Ovary (tissue), 10 donors: ENCODE measurements at regions of chr7 and their contacts with region 1.

Region 1: DNA sequence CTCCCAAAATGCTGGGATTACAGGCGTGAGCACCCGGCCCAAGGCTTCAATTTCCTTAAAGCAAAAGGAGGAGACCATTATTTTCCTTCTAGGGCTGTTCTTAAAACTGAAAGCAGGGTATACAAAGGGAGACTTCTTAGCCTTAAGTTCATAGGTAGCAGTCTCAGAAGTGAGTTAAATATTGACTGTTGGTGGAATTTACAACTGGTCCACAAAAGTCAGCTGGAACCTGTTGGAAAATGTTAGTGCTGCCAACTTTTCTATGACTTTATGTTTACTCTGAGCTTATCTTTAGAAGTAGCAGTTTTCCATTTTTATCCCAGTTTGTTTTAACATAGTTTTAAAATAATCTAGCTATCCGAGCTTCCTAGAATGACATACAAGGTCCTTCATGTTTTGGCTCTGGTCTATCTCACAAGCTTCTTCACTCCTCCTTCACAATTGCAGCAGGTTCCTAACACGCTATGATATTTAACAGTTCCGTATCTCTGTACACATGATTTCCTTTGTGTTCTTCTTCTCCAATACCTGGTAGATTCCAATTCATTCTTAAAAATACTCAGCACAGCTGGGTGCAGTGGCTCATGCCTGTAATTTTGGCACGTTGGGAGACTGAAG is 3.3 kb downstream of the SLC26A3 start:
- DNase-seq: no peak
- H3K4me3 ChIP-seq: no peak overlapping the region
- H3K27ac ChIP-seq: peak overlapping the region in 1 of 2 donors; percentile 1
- H3K4me1 ChIP-seq: peaks cover 11% of the 10 kb centered on the region
- H3K27me3 ChIP-seq: no peaks in the 10 kb centered on the region
- CTCF ChIP-seq: no peak
- EP300 ChIP-seq: no peak
- POLR2A ChIP-seq: no peak

Region 2: DNA sequence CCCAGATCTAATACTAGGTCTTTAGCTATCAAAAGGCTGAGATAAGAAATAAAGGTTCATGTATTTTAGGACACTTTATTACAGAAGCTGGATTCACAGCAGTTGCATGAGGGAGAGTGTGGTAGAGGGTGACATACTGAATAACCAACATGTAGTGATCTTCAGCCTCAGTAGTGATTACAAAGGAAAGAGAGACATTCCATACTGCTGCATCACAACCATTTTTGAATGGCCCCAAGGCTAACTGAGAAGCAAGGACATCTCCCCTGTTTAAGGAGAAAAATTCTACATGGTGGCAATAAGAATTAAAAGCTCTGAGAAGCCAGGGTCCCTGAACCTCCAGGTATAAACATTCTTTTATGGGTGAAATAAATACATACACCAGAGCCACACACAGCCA is 271.3 kb before region 1 on chr7:
- intact Hi-C with region 1: no loop called
- DNase-seq: no peak
- H3K4me3 ChIP-seq: no peak overlapping the region
- H3K27ac ChIP-seq: no peak overlapping the region
- H3K4me1 ChIP-seq: no peaks in the 10 kb centered on the region
- H3K27me3 ChIP-seq: no peaks in the 10 kb centered on the region
- CTCF ChIP-seq: no peak
- EP300 ChIP-seq: no peak
- POLR2A ChIP-seq: no peak

Region 3: GRCh38 chr7:107563775-107564552 is 235.8 kb before region 1 on chr7 and contains the starts of genes COG5 and DUS4L:
- intact Hi-C with region 1: no loop called
- DNase-seq: peak; percentile 84 to 91 (median 88)
- H3K4me3 ChIP-seq: peak within 1 kb of the TSS; percentile 92
- H3K27ac ChIP-seq: peak within 1 kb of the TSS; percentile 40 to 83
- H3K4me1 ChIP-seq: no peaks in the 10 kb centered on the region
- H3K27me3 ChIP-seq: no peaks in the 10 kb centered on the region
- CTCF ChIP-seq: no peak
- EP300 ChIP-seq: no peak
- POLR2A ChIP-seq: peak; percentile 75
- total RNA-seq, gene COG5: 32.7 to 49.7 (median 38.4) TPM
- total RNA-seq, gene DUS4L: 4.4 to 8.1 (median 5.4) TPM

Region 4: GRCh38 chr7:107856806-107857540 is 57.2 kb after region 1 on chr7:
- intact Hi-C with region 1: loop called in 1 of 4 experiments (anchors 10 kb)
- DNase-seq: no peak
- H3K4me3 ChIP-seq: no peak overlapping the region
- H3K27ac ChIP-seq: peak overlapping the region in 1 of 2 donors; percentile 34
- H3K4me1 ChIP-seq: peaks cover 9% of the 10 kb centered on the region
- H3K27me3 ChIP-seq: no peaks in the 10 kb centered on the region
- CTCF ChIP-seq: no peak
- EP300 ChIP-seq: no peak
- POLR2A ChIP-seq: no peak

Region 5: GRCh38 chr7:108135446-108136190 is 335.9 kb after region 1 on chr7:
- intact Hi-C with region 1: no loop called
- DNase-seq: no peak
- H3K4me3 ChIP-seq: no peak overlapping the region
- H3K27ac ChIP-seq: no peak overlapping the region
- H3K4me1 ChIP-seq: no peaks in the 10 kb centered on the region
- H3K27me3 ChIP-seq: no peaks in the 10 kb centered on the region
- CTCF ChIP-seq: no peak
- EP300 ChIP-seq: no peak
- POLR2A ChIP-seq: no peak